ENCODE measurements at regions of chr11 and their contacts with region 1.

Region 1: DNA sequence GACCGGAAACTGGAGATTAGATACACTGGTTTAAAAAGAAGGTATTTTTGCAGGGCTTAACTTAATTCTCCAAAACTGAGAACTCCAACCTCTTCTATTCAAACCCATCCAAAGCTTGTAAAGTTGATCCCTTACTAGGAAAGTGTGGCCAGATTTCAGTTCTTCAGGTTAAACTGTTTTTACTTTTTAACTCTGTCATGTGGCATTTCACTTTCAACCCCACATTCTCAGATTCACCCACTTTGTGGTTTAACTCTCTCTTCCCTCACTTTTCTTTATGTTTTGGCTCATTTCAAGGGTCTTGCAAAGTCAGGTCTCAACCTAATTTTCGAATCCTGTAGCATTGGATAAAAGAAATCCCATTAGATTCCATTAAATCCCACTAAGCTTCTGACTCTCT is 75.4 kb downstream of the MPPED2 start:
- DNase-seq: no peak
- H3K4me3 ChIP-seq: no peak overlapping the region
- H3K27ac ChIP-seq: no peak overlapping the region
- H3K4me1 ChIP-seq: no peaks in the 10 kb centered on the region
- H3K27me3 ChIP-seq: no peaks in the 10 kb centered on the region
- CTCF ChIP-seq: no peak

Region 2: DNA sequence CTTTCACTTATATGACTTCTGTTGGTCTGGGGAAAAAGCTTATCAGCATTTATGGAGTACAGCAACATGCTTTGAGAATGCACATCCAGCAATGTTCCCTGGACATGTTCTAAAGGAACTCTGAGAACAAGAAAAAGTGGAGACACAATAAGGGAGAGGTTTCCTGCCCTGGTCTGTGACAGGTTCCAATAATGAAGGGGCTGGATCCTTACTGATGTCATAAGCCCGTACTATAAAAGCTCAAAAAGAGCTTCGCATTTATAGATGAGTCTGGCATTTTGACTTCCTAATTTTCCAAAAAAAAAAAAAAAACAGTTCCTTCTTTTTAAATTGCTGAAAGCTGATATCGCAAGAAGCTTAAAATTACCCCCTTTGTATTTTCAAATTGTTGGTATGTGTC is 53.7 kb before region 1 on chr11:
- CTCF ChIA-PET with region 1: no interaction called
- POLR2A ChIA-PET with region 1: interaction called, 15 read pairs
- intact Hi-C with region 1: no loop called
- DNase-seq: no peak
- H3K4me3 ChIP-seq: no peak overlapping the region
- H3K27ac ChIP-seq: no peak overlapping the region
- H3K4me1 ChIP-seq: no peaks in the 10 kb centered on the region
- H3K27me3 ChIP-seq: peaks cover 4% of the 10 kb centered on the region
- CTCF ChIP-seq: no peak

Measured in A673 (cell line).